Activated naive CD4-positive, alpha-beta T cell treated with anti-CD3 and anti-CD28 coated beads for 36 hours (primary cell): ENCODE measurements at regions of chr22 and their contacts with region 1.

Region 1: GRCh38 chr22:22787786-22788459 is 99.7 kb upstream of the IGLL5 start:
- DNase-seq: peak; percentile 74
- H3K4me3 Mint-ChIP-seq: no peak overlapping the region
- H3K27ac Mint-ChIP-seq: no peak overlapping the region
- H3K4me1 Mint-ChIP-seq: peaks cover 16% of the 10 kb centered on the region
- H3K27me3 Mint-ChIP-seq: no peaks in the 10 kb centered on the region

Region 2: GRCh38 chr22:22463855-22464540 is 323.9 kb before region 1 on chr22:
- CTCF ChIA-PET with region 1: no interaction called
- intact Hi-C with region 1: no loop called
- DNase-seq: peak; percentile 75
- H3K4me3 Mint-ChIP-seq: no peak overlapping the region
- H3K27ac Mint-ChIP-seq: no peak overlapping the region
- H3K4me1 Mint-ChIP-seq: no peaks in the 10 kb centered on the region
- H3K27me3 Mint-ChIP-seq: peaks cover 27% of the 10 kb centered on the region

Region 3: GRCh38 chr22:22770280-22770871 is 17.5 kb before region 1 on chr22:
- CTCF ChIA-PET with region 1: interaction called, 15 read pairs
- intact Hi-C with region 1: no loop called
- DNase-seq: peak; percentile 61
- H3K4me3 Mint-ChIP-seq: no peak overlapping the region
- H3K27ac Mint-ChIP-seq: no peak overlapping the region
- H3K4me1 Mint-ChIP-seq: no peaks in the 10 kb centered on the region
- H3K27me3 Mint-ChIP-seq: peaks cover 7% of the 10 kb centered on the region

Region 4: DNA sequence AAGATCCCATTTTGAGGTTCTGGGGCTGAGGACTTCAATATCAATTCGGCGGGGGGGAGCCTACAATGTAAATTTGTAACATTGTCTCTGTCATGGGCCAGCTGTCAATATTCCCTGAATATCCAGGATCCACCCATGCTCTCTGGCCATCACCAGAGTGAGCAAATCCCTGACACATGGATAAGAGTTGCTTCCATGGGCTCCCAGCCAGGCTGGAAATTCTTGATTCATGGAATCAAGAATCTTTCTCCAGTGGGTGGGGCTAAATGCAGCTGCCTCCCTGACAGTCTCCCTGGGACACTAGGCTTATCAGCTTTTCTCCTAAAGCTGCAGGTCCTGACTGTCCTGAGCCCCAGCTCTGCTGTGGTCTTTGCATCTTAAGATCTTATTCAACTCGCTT is 12.8 kb after region 1 on chr22:
- CTCF ChIA-PET with region 1: interaction called, 20 read pairs
- intact Hi-C with region 1: no loop called
- DNase-seq: no peak
- H3K4me3 Mint-ChIP-seq: no peak overlapping the region
- H3K27ac Mint-ChIP-seq: no peak overlapping the region
- H3K4me1 Mint-ChIP-seq: peaks cover 2% of the 10 kb centered on the region
- H3K27me3 Mint-ChIP-seq: no peaks in the 10 kb centered on the region

Region 5: DNA sequence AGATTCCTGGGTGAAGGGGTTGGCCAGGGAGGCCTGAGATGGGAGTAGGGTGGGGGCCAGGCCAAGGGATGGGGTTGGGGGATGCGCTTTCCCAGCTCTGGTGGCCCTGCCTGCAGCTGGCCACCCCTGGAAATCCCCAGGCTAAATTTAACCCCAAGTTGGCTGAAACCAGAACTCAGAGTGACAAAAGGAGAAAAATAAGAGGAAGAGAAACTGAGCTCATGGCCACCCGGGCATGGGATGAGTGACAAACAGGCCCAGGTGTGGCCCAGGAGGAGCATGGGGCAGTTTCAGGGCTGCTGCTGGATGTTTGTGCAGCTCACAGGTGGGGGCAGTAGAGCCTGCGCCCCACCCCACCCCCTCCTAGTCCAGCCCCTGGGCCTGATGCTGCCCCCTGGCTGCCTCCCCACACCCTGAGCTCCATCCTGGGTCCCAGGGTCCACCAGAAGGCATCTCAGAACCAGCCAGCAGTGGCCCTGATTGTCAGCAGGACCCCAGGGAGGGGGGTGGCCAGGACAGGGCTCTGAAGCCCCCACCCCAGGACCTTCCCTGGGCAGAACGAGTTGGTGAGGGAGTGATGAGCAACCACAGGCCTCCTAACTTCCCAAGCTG is 147.7 kb after region 1 on chr22:
- CTCF ChIA-PET with region 1: no interaction called
- intact Hi-C with region 1: no loop called
- DNase-seq: peak; percentile 31
- H3K4me3 Mint-ChIP-seq: no peak overlapping the region
- H3K27ac Mint-ChIP-seq: no peak overlapping the region
- H3K4me1 Mint-ChIP-seq: peaks cover 4% of the 10 kb centered on the region
- H3K27me3 Mint-ChIP-seq: no peaks in the 10 kb centered on the region